ENCODE measurements at regions of chr12 and their contacts with region 1.

Region 1: GRCh38 chr12:8032242-8033152 is at the start of gene FOXJ2:
- DNase-seq: peak; percentile 75 to 84 (median 82)
- H3K4me3 ChIP-seq: peak within 1 kb of the TSS; percentile 87 to 95
- H3K4me3 Mint-ChIP-seq: peak within 1 kb of the TSS; percentile 88 to 94 (median 90)
- H3K27ac ChIP-seq: peak within 1 kb of the TSS; percentile 97
- H3K27ac Mint-ChIP-seq: peak within 1 kb of the TSS; percentile 93 to 97 (median 96)
- H3K4me1 ChIP-seq: peaks cover 57% of the 10 kb centered on the region
- H3K4me1 Mint-ChIP-seq: peaks cover 41 to 56% (median 52%) of the 10 kb centered on the region in 4 donors
- H3K27me3 ChIP-seq: no peaks in the 10 kb centered on the region
- H3K27me3 Mint-ChIP-seq: no peaks in the 10 kb centered on the region
- total RNA-seq, gene FOXJ2: 32.4 to 33.4 TPM

Region 2: GRCh38 chr12:7797698-7798398 is 234.6 kb before region 1 on chr12:
- CTCF ChIA-PET with region 1: no interaction called
- POLR2A ChIA-PET with region 1: no interaction called
- intact Hi-C with region 1: no loop called
- DNase-seq: no peak
- H3K4me3 ChIP-seq: no peak overlapping the region
- H3K4me3 Mint-ChIP-seq: no peak overlapping the region
- H3K27ac ChIP-seq: no peak overlapping the region
- H3K27ac Mint-ChIP-seq: no peak overlapping the region
- H3K4me1 ChIP-seq: no peaks in the 10 kb centered on the region
- H3K4me1 Mint-ChIP-seq: no peaks in the 10 kb centered on the region
- H3K27me3 ChIP-seq: no peaks in the 10 kb centered on the region
- H3K27me3 Mint-ChIP-seq: peaks cover 0 to 2% of the 10 kb centered on the region in 2 donors

Region 3: GRCh38 chr12:7869127-7869526 is 163.4 kb before region 1 on chr12:
- CTCF ChIA-PET with region 1: no interaction called
- POLR2A ChIA-PET with region 1: no interaction called
- intact Hi-C with region 1: no loop called
- DNase-seq: no peak
- H3K4me3 ChIP-seq: no peak overlapping the region
- H3K4me3 Mint-ChIP-seq: no peak overlapping the region
- H3K27ac ChIP-seq: no peak overlapping the region
- H3K27ac Mint-ChIP-seq: no peak overlapping the region
- H3K4me1 ChIP-seq: no peaks in the 10 kb centered on the region
- H3K4me1 Mint-ChIP-seq: peaks cover 0 to 3% (median 0%) of the 10 kb centered on the region in 4 donors
- H3K27me3 ChIP-seq: no peaks in the 10 kb centered on the region
- H3K27me3 Mint-ChIP-seq: peaks cover 20% of the 10 kb centered on the region in 2 donors

Region 4: GRCh38 chr12:8045952-8046944 is 13.8 kb after region 1 on chr12:
- CTCF ChIA-PET with region 1: interaction called, 46 read pairs
- POLR2A ChIA-PET with region 1: interaction called, 11 read pairs
- intact Hi-C with region 1: loop called (anchors 1 kb)
- DNase-seq: peak; percentile 77 to 82 (median 78)
- H3K4me3 ChIP-seq: no peak overlapping the region
- H3K4me3 Mint-ChIP-seq: peak overlapping the region in 1 of 8 donors; percentile 36
- H3K27ac ChIP-seq: no peak overlapping the region
- H3K27ac Mint-ChIP-seq: peak overlapping the region; percentile 3 to 76 (median 66)
- H3K4me1 ChIP-seq: peaks cover 6% of the 10 kb centered on the region
- H3K4me1 Mint-ChIP-seq: peaks cover 7 to 16% (median 8%) of the 10 kb centered on the region in 4 donors
- H3K27me3 ChIP-seq: no peaks in the 10 kb centered on the region
- H3K27me3 Mint-ChIP-seq: no peaks in the 10 kb centered on the region

Region 5: GRCh38 chr12:8065991-8066594 is 33.6 kb after region 1 on chr12 and contains the start of gene C3AR1:
- CTCF ChIA-PET with region 1: interaction called, 3 read pairs
- POLR2A ChIA-PET with region 1: interaction called, 14 read pairs
- intact Hi-C with region 1: loop called (anchors 2 kb)
- DNase-seq: peak; percentile 68 to 85 (median 76)
- H3K4me3 ChIP-seq: peak within 1 kb of the TSS in 1 of 2 donors; percentile 16
- H3K4me3 Mint-ChIP-seq: peak within 1 kb of the TSS; percentile 39 to 83 (median 79)
- H3K27ac ChIP-seq: peak within 1 kb of the TSS; percentile 44
- H3K27ac Mint-ChIP-seq: peak within 1 kb of the TSS; percentile 80 to 98 (median 94)
- H3K4me1 ChIP-seq: peaks cover 34% of the 10 kb centered on the region
- H3K4me1 Mint-ChIP-seq: peaks cover 27 to 55% (median 40%) of the 10 kb centered on the region in 4 donors
- H3K27me3 ChIP-seq: no peaks in the 10 kb centered on the region
- H3K27me3 Mint-ChIP-seq: no peaks in the 10 kb centered on the region
- total RNA-seq, gene C3AR1: 4.6 to 6.1 TPM

Region 6: DNA sequence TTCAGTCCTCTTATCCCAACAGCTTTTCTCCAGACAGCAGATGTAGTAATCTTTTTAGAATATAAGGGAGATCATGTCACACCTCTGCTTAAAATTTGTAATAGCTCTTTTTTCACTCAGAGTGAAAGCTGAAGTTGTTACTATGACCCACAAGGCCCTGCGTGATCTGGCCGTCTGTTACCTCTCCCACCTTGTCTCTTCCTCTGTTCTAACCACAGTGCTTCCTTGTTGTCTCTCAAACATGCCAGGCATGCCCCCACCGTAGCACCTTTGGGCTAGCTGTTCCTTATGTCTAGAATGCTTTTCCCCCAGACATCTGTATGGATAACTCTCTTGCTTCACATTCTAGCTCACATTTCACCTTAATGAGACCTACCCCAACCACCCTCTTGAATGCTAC is 56.1 kb after region 1 on chr12:
- CTCF ChIA-PET with region 1: interaction called, 85 read pairs
- POLR2A ChIA-PET with region 1: interaction called, 11 read pairs
- intact Hi-C with region 1: no loop called
- DNase-seq: peak; percentile 35 to 65 (median 52)
- H3K4me3 ChIP-seq: peak overlapping the region in 1 of 2 donors; percentile 26
- H3K4me3 Mint-ChIP-seq: peak overlapping the region; percentile 70 to 86 (median 82)
- H3K27ac ChIP-seq: peak overlapping the region; percentile 58
- H3K27ac Mint-ChIP-seq: peak overlapping the region; percentile 85 to 96 (median 94)
- H3K4me1 ChIP-seq: peaks cover 60% of the 10 kb centered on the region
- H3K4me1 Mint-ChIP-seq: peaks cover 37 to 59% (median 41%) of the 10 kb centered on the region in 4 donors
- H3K27me3 ChIP-seq: no peaks in the 10 kb centered on the region
- H3K27me3 Mint-ChIP-seq: no peaks in the 10 kb centered on the region

Region 7: GRCh38 chr12:8145754-8146441 is 113.4 kb after region 1 on chr12:
- CTCF ChIA-PET with region 1: no interaction called
- POLR2A ChIA-PET with region 1: no interaction called
- intact Hi-C with region 1: no loop called
- DNase-seq: peak in 1 of 5 donors; percentile 13
- H3K4me3 ChIP-seq: no peak overlapping the region
- H3K4me3 Mint-ChIP-seq: no peak overlapping the region
- H3K27ac ChIP-seq: no peak overlapping the region
- H3K27ac Mint-ChIP-seq: no peak overlapping the region
- H3K4me1 ChIP-seq: no peaks in the 10 kb centered on the region
- H3K4me1 Mint-ChIP-seq: no peaks in the 10 kb centered on the region
- H3K27me3 ChIP-seq: no peaks in the 10 kb centered on the region
- H3K27me3 Mint-ChIP-seq: peaks cover 6 to 7% of the 10 kb centered on the region in 2 donors